Body of pancreas (tissue), 4 donors: ENCODE measurements at regions of chr1 and their contacts with region 1.

Region 1: GRCh38 chr1:241639623-241640028 is 543 bp downstream of the CHML start:
- DNase-seq: no peak
- ATAC-seq: peak; percentile 19
- H3K4me3 ChIP-seq: peak overlapping the region; percentile 56 to 88
- H3K27ac ChIP-seq: peak overlapping the region in 3 of 4 donors; percentile 69 to 81 (median 81)
- H3K4me1 ChIP-seq: peaks cover 38% of the 10 kb centered on the region
- H3K27me3 ChIP-seq: no peaks in the 10 kb centered on the region
- CTCF ChIP-seq: peak in 1 of 7 experiments; percentile 8
- POLR2A ChIP-seq: peak in 1 of 3 donors; percentile 37

Region 2: DNA sequence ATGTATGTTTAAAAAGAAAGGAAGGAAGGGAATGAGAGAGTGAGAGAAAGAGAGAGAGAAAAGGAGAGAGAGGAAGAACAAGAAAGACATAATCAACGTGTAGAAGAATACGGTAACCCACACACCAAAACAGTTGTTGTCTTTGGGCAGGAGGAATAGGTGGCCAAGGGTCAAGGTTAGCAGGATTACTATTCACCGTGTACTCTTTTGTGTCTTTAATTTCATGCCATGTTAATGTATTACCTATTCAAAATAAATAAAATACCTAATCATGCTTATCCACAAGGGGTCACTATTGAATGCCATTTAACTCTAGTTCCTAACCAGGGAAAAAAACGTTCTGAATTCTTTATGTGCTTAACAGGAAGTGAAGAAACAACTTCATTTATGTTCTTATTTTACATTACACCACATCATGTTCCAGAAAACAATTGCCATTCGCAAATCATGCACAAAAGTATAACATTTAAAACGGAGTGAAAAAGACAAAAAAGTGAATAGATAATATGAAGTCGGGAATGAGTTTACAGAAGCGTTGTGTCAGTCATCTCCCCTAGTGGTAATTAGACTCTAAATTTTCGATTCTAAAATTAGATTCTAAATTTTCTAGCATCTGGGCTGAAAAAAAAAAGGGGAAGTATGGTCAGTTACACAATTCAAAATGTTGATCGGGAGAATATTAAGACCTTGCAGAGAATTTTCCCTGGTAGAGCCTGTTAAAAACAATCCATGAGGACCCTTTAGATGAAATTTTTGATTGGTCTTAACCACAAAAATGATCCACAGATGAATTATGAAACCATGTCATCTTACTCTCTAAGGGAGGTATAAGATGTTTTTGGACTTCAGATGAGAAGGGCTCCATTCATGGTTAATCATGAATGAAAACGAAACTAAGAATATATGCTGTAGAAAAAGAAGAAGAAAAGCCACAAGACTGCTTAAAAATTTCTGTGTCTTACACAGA is 108.1 kb before region 1 on chr1:
- intact Hi-C with region 1: loop called (anchors 10 kb)
- DNase-seq: no peak
- ATAC-seq: peak; percentile 95
- H3K4me3 ChIP-seq: peak overlapping the region in 1 of 2 donors; percentile 26
- H3K27ac ChIP-seq: peak overlapping the region in 2 of 4 donors; percentile 1 to 72
- H3K4me1 ChIP-seq: no peaks in the 10 kb centered on the region
- H3K27me3 ChIP-seq: no peaks in the 10 kb centered on the region
- CTCF ChIP-seq: peak in 6 of 7 experiments; percentile 55 to 80 (median 74)
- POLR2A ChIP-seq: no peak